ENCODE measurements at regions of chr19 and their contacts with region 1.

Region 1: DNA sequence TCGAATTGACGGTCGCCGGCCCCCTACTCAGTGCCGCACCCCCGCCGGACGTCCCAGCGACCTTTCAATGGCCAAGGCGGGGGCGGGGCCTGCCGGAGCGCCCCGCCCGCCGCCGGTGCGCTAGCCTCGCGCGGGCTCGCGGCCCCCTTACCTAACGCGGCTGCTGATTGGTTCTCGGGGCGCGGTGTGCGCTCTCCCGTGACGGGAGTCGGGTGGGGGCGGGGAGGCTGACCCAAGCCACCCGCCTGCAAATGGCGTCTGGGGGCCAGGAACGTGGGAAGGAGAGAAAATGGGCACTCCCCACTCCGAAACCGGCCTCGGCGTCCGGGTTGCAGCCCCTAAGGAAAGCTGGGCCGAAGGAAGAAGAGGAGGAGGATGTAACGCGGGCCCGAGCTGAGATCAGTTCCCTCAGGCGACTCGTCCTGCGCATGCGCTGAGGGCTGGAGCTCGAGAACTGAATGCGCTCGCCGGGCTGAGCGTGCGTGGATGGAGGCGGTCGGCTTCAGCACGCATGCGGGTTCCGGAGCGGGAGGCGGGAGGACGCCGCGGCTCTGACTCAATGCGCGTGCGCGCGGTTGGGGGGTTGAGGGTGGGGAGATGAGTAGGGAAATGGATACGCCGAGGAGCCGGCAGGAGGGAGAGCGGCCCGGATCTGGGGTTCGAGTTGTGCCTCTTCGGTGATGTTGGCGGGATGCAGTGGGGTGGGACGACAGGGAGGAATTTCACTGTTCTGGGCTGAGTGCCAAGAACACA is at the start of gene SMG9:
- DNase-seq: peak; percentile 92 to 99 (median 96)

Region 2: GRCh38 chr19:43668406-43669158 is 86.1 kb before region 1 on chr19:
- intact Hi-C with region 1: loop called (anchors 10 kb)
- DNase-seq: peak; percentile 92 to 100 (median 96)

Region 3: DNA sequence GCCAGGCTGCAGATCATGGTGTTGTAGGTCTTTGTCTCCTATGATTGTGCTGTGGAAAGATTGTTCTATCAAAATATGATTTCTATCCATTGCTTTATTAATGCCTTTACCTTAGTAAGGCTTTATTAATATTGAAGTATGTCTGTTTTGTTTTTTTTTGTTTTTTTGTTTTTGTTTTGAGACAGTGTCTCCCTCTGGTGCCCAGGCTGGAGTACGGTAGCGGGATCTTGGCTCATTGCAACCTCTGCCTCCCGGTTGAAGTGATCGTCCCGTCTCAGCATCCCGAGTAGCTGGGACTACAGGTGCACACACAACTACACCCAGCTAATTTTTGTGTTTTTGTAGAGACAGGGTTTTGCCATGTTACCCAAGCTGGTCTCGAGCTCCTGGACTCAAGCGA is 31.1 kb before region 1 on chr19:
- intact Hi-C with region 1: no loop called
- DNase-seq: no peak

Measured in posterior cingulate gyrus (tissue), 11 donors.